MCF 10A (cell line): ENCODE measurements at regions of chr11 and their contacts with region 1.

Region 1: GRCh38 chr11:14907411-14908213 is 15.6 kb upstream of the CYP2R1 start:
- DNase-seq: peak; percentile 70
- H3K4me3 Mint-ChIP-seq: peak overlapping the region; percentile 43
- H3K27ac Mint-ChIP-seq: no peak overlapping the region
- H3K4me1 Mint-ChIP-seq: peaks cover 16% of the 10 kb centered on the region
- H3K27me3 Mint-ChIP-seq: peaks cover 22% of the 10 kb centered on the region
- CTCF ChIP-seq: peak; percentile 90

Region 2: DNA sequence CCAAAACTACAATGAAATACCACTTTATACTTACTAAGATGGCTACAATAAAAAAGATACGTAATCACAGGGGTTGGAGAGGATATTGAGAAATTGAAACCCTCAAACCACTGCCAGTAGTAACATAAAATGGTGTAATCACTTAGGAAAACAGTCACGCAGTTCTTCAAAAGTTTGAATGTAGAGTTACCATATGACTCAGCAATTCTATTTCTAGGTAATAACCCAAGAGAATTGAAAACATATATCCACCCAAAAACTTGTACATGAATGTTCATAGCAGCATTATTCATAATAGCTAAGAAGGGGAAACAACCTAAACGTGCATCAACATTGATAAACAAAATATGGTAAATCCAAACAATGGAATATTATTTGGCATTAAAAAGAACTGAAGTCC is 363.0 kb before region 1 on chr11:
- CTCF ChIA-PET with region 1: interaction called, 32 read pairs
- POLR2A ChIA-PET with region 1: no interaction called
- intact Hi-C with region 1: no loop called
- DNase-seq: peak; percentile 70
- H3K4me3 Mint-ChIP-seq: no peak overlapping the region
- H3K27ac Mint-ChIP-seq: peak overlapping the region; percentile 54
- H3K4me1 Mint-ChIP-seq: peaks cover 11% of the 10 kb centered on the region
- H3K27me3 Mint-ChIP-seq: no peaks in the 10 kb centered on the region
- CTCF ChIP-seq: no peak

Region 3: GRCh38 chr11:14617241-14618027 is 290.2 kb before region 1 on chr11:
- CTCF ChIA-PET with region 1: no interaction called
- POLR2A ChIA-PET with region 1: no interaction called
- intact Hi-C with region 1: no loop called
- DNase-seq: peak; percentile 53
- H3K4me3 Mint-ChIP-seq: no peak overlapping the region
- H3K27ac Mint-ChIP-seq: no peak overlapping the region
- H3K4me1 Mint-ChIP-seq: no peaks in the 10 kb centered on the region
- H3K27me3 Mint-ChIP-seq: peaks cover 9% of the 10 kb centered on the region
- CTCF ChIP-seq: no peak

Region 4: DNA sequence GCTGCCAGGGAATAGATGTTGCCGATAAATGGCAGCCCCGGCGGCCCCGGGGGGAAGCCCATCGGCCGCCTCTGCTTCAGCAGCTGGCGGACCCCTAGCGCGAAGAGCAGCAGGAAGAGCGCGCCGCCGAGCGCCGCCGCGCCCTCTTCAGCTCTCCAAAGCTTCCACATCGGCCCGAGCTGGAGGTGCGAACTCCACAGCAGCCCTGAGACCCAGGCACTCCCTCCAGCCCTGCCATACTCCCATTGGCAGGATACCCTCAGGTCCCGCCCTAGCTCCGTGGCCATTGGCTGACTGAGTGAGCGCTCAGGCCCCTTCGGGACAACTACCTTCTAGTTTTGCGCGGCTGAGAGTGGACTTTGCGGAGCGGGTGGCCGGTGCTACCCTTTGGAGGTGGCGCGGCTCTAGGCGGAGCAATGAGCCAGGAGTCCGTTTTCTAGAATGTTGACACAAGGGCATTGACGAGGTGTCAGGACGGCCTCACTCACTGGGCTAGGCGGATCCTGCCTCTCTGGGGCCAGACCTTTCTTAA is 15.5 kb before region 1 on chr11 and contains the start of gene CYP2R1:
- CTCF ChIA-PET with region 1: interaction called, 54 read pairs
- POLR2A ChIA-PET with region 1: interaction called, 19 read pairs
- intact Hi-C with region 1: no loop called
- DNase-seq: peak; percentile 99
- H3K4me3 Mint-ChIP-seq: peak within 1 kb of the TSS; percentile 94
- H3K27ac Mint-ChIP-seq: peak within 1 kb of the TSS; percentile 77
- H3K4me1 Mint-ChIP-seq: peaks cover 34% of the 10 kb centered on the region
- H3K27me3 Mint-ChIP-seq: no peaks in the 10 kb centered on the region
- CTCF ChIP-seq: no peak
- total RNA-seq, gene CYP2R1: 20.5 and 22.0 TPM in 2 replicates

Region 5: DNA sequence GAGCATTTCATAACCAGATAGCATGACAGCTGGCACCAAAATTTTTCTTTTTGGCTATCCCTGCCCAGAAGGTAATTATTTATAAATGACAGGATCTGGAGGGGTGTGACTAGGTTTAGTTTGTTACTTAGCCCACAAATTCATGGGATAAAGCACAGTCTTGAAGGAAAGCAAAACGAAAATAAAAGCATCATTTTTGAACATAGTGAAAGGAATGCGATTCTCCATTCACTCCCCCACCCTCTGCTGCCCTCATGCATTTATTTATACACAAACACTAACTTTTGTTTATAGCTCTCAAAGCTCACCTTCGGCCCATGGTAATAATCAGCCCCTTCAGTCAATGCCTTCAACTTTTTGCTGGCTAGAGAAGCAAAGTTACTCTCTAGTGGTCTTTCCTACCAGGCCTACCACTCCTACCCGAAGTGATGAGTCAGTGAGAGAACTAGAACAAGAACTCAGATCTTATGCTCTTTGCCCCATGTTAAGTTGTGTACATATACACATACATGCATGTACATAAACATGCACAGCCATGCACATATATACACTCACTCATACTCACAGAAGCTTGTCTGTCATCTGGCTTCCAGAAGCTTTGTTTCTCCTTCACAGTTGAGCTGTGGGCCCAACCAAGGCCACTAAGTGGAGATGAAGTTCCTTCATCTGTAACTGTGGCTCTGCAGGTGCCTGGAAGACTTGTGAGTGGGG is 42.0 kb after region 1 on chr11:
- CTCF ChIA-PET with region 1: interaction called, 14 read pairs
- POLR2A ChIA-PET with region 1: no interaction called
- intact Hi-C with region 1: no loop called
- DNase-seq: no peak
- H3K4me3 Mint-ChIP-seq: no peak overlapping the region
- H3K27ac Mint-ChIP-seq: no peak overlapping the region
- H3K4me1 Mint-ChIP-seq: peaks cover 9% of the 10 kb centered on the region
- H3K27me3 Mint-ChIP-seq: no peaks in the 10 kb centered on the region
- CTCF ChIP-seq: no peak

Region 6: DNA sequence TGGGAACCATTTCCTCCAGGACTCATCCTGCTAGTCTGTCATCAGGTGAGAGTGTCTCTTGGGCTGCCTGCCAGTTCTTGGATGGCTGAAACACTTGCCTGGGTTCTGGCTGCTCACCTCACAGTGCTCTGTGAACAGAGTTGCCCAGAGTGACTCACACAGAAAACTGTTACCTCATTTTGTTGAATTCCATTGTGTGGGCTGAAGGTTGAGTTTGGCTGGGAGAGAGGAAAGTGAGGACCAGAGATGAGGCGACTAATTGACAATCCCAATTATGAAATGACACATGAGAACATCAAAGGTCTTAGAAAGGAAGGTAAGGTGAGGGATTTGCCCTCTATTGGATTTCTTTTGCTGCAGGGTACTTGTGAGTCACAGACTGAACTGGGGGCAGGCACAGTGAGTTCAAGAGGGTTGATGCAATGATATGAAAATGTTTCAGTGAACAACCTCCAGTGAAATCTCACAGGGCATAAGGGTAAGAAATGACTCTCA is 145.6 kb after region 1 on chr11:
- CTCF ChIA-PET with region 1: interaction called, 15 read pairs
- POLR2A ChIA-PET with region 1: no interaction called
- intact Hi-C with region 1: no loop called
- DNase-seq: peak; percentile 94
- H3K4me3 Mint-ChIP-seq: peak overlapping the region; percentile 7
- H3K27ac Mint-ChIP-seq: peak overlapping the region; percentile 53
- H3K4me1 Mint-ChIP-seq: peaks cover 18% of the 10 kb centered on the region
- H3K27me3 Mint-ChIP-seq: no peaks in the 10 kb centered on the region
- CTCF ChIP-seq: no peak

Region 7: GRCh38 chr11:15101072-15101709 is 193.6 kb after region 1 on chr11:
- CTCF ChIA-PET with region 1: interaction called, 44 read pairs
- POLR2A ChIA-PET with region 1: interaction called, 3 read pairs
- intact Hi-C with region 1: loop called (anchors 1 kb)
- DNase-seq: peak; percentile 80
- H3K4me3 Mint-ChIP-seq: no peak overlapping the region
- H3K27ac Mint-ChIP-seq: no peak overlapping the region
- H3K4me1 Mint-ChIP-seq: peaks cover 21% of the 10 kb centered on the region
- H3K27me3 Mint-ChIP-seq: no peaks in the 10 kb centered on the region
- CTCF ChIP-seq: peak; percentile 93

Region 8: DNA sequence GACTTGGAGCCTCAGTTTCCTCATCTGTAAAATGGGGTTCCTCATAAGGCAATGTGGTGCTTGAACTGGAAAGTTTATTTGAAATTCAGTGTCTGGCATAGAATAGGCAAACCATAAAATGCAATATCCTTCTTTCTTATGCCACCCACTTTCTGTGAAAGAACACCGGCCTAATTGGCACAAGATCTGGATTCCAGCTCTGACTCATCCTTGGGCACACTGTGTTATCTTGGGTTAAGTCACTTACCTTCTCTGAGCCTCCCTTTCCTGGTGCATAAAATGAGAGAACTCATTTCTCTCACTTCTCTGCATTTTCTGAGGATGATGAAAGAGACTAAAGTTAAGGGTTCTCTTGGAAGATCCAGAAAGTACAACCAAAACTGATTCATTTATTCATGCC is 212.2 kb after region 1 on chr11:
- CTCF ChIA-PET with region 1: no interaction called
- POLR2A ChIA-PET with region 1: no interaction called
- intact Hi-C with region 1: no loop called
- DNase-seq: peak; percentile 85
- H3K4me3 Mint-ChIP-seq: no peak overlapping the region
- H3K27ac Mint-ChIP-seq: peak overlapping the region; percentile 6
- H3K4me1 Mint-ChIP-seq: peaks cover 38% of the 10 kb centered on the region
- H3K27me3 Mint-ChIP-seq: no peaks in the 10 kb centered on the region
- CTCF ChIP-seq: no peak

Region 9: GRCh38 chr11:15208378-15209222 is 301.0 kb after region 1 on chr11:
- CTCF ChIA-PET with region 1: interaction called, 57 read pairs
- POLR2A ChIA-PET with region 1: no interaction called
- intact Hi-C with region 1: loop called (anchors 1 kb)
- DNase-seq: peak; percentile 71
- H3K4me3 Mint-ChIP-seq: no peak overlapping the region
- H3K27ac Mint-ChIP-seq: no peak overlapping the region
- H3K4me1 Mint-ChIP-seq: no peaks in the 10 kb centered on the region
- H3K27me3 Mint-ChIP-seq: no peaks in the 10 kb centered on the region
- CTCF ChIP-seq: peak; percentile 95

Region 10: GRCh38 chr11:15326535-15326934 is 418.9 kb after region 1 on chr11:
- CTCF ChIA-PET with region 1: no interaction called
- POLR2A ChIA-PET with region 1: no interaction called
- intact Hi-C with region 1: no loop called
- DNase-seq: no peak
- H3K4me3 Mint-ChIP-seq: no peak overlapping the region
- H3K27ac Mint-ChIP-seq: no peak overlapping the region
- H3K4me1 Mint-ChIP-seq: no peaks in the 10 kb centered on the region
- H3K27me3 Mint-ChIP-seq: peaks cover 48% of the 10 kb centered on the region
- CTCF ChIP-seq: no peak